ENCODE measurements at regions of chr5 and their contacts with region 1.

Region 1: DNA sequence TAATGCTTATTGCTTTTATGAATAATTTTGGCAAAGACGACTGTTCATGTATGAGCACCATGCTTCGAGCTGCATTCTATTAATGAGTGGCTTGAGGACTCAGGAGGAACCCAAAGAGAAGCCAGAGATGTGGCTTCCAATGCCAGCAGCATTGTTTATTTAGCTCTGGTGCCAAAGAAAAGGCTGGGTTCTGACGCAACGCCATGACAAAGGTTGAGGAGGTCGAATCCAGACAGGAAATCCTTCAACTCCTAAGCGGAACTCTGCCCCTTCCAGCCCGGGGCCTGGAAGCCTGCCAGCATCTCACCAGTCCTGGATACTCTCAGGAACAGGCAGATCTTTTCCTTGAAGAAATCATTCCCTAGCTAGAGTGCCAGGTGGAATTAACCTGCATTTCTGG is 104.4 kb downstream of the ARHGAP26 start:
- DNase-seq: peak; percentile 39
- ATAC-seq: no peak
- H3K4me3 ChIP-seq: no peak overlapping the region
- H3K27ac ChIP-seq: peak overlapping the region; percentile 60; the same call in 1 of the 2 replicates
- H3K4me1 ChIP-seq: peaks cover 67% of the 10 kb centered on the region
- H3K27me3 ChIP-seq: no peaks in the 10 kb centered on the region
- CTCF ChIP-seq: no peak

Region 2: GRCh38 chr5:142783601-142784341 is 90.8 kb before region 1 on chr5:
- CTCF ChIA-PET with region 1: interaction called, 3 read pairs
- POLR2A ChIA-PET with region 1: interaction called, 12 read pairs
- in situ Hi-C with region 1: no loop called
- intact Hi-C with region 1: no loop called
- DNase-seq: no peak
- ATAC-seq: peak; percentile 71
- H3K4me3 ChIP-seq: no peak overlapping the region
- H3K27ac ChIP-seq: peak overlapping the region; percentile 75
- H3K4me1 ChIP-seq: peaks cover 61% of the 10 kb centered on the region
- H3K27me3 ChIP-seq: no peaks in the 10 kb centered on the region
- CTCF ChIP-seq: no peak

Region 3: GRCh38 chr5:142807372-142807911 is 67.1 kb before region 1 on chr5:
- CTCF ChIA-PET with region 1: no interaction called
- POLR2A ChIA-PET with region 1: no interaction called
- in situ Hi-C with region 1: no loop called
- intact Hi-C with region 1: no loop called
- DNase-seq: no peak
- ATAC-seq: peak; percentile 47
- H3K4me3 ChIP-seq: no peak overlapping the region
- H3K27ac ChIP-seq: peak overlapping the region; percentile 82
- H3K4me1 ChIP-seq: peaks cover 68% of the 10 kb centered on the region
- H3K27me3 ChIP-seq: no peaks in the 10 kb centered on the region
- CTCF ChIP-seq: no peak

Region 4: GRCh38 chr5:142959683-142960657 is 85.4 kb after region 1 on chr5:
- CTCF ChIA-PET with region 1: no interaction called
- POLR2A ChIA-PET with region 1: no interaction called
- in situ Hi-C with region 1: no loop called
- intact Hi-C with region 1: no loop called
- DNase-seq: peak; percentile 59
- ATAC-seq: peak; percentile 81
- H3K4me3 ChIP-seq: no peak overlapping the region
- H3K27ac ChIP-seq: no peak overlapping the region
- H3K4me1 ChIP-seq: 0 out of 2 replicates have a peak, but pooled peaks cover 3% of the 10 kb centered on the region
- H3K27me3 ChIP-seq: no peaks in the 10 kb centered on the region
- CTCF ChIP-seq: no peak